ENCODE measurements at regions of chr5 and their contacts with region 1.

Region 1: GRCh38 chr5:175718401-175719108 is 60.7 kb downstream of the HRH2 start:
- DNase-seq: no peak
- ATAC-seq: no peak
- H3K4me3 ChIP-seq: no peak overlapping the region
- H3K27ac ChIP-seq: no peak overlapping the region
- H3K4me1 ChIP-seq: no peaks in the 10 kb centered on the region
- H3K27me3 ChIP-seq: 0 out of 2 replicates have a peak, but pooled peaks cover 2% of the 10 kb centered on the region
- CTCF ChIP-seq: peak; percentile 87

Region 2: GRCh38 chr5:175059687-175060211 is 658.8 kb before region 1 on chr5:
- CTCF ChIA-PET with region 1: interaction called, 12 read pairs
- POLR2A ChIA-PET with region 1: no interaction called
- in situ Hi-C with region 1: no loop called
- intact Hi-C with region 1: no loop called
- DNase-seq: no peak
- ATAC-seq: peak; percentile 30; the same call in 1 of the 2 replicates
- H3K4me3 ChIP-seq: peak overlapping the region in 1 of 2 experiments; percentile 37; a peak in 2 of 4 replicates
- H3K27ac ChIP-seq: no peak overlapping the region
- H3K4me1 ChIP-seq: no peaks in the 10 kb centered on the region
- H3K27me3 ChIP-seq: no peaks in the 10 kb centered on the region
- CTCF ChIP-seq: no peak

Region 3: GRCh38 chr5:175288048-175288621 is 430.4 kb before region 1 on chr5:
- CTCF ChIA-PET with region 1: no interaction called
- POLR2A ChIA-PET with region 1: no interaction called
- in situ Hi-C with region 1: no loop called
- intact Hi-C with region 1: no loop called
- DNase-seq: no peak
- ATAC-seq: peak; percentile 53
- H3K4me3 ChIP-seq: no peak overlapping the region
- H3K27ac ChIP-seq: no peak overlapping the region
- H3K4me1 ChIP-seq: no peaks in the 10 kb centered on the region
- H3K27me3 ChIP-seq: no peaks in the 10 kb centered on the region
- CTCF ChIP-seq: no peak

Region 4: DNA sequence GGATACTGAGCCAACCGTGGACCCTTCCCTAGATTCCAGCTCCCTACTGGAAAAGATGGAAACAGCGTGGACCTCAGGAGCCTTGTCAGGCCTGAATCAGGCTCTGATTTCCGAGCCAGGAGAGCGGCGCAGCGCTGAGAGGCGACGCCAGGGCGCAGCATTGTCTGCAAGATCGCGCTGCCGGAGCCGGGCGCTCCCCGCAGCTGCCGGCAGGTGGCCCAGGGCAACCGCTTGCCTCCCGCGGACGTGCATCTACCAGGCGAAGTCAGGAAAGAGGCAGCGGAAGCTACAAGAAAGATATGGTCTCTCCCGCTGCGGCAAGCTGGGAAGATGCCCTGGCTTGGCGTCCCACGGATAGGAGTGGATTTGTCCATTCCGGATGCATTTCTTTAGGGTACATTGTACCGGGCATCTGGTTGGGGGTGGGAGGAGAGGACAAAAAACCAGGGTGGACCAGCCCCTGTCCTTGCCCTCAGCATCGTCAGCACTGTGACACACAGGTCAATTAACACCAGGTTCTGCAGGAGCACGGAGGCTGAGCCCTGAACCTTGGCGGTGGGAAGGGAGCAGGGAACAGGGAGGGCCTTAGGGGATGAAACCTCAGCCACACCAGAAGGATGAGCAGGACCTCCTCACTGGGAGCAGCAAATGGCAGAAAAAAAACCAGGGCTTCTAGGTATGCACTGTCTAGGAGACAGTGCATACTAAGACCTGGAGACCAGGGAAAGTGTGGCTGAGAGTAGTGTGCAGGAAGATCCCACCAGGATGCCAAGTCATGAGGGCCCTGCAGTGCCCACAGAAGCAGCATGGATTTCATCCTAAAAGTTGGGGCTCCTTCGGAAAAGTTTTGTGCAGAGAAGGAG is 184.3 kb before region 1 on chr5:
- CTCF ChIA-PET with region 1: interaction called, 11 read pairs
- POLR2A ChIA-PET with region 1: no interaction called
- in situ Hi-C with region 1: no loop called
- intact Hi-C with region 1: loop called (anchors 2 kb)
- DNase-seq: peak; percentile 33
- ATAC-seq: peak; percentile 98
- H3K4me3 ChIP-seq: no peak overlapping the region
- H3K27ac ChIP-seq: no peak overlapping the region
- H3K4me1 ChIP-seq: no peaks in the 10 kb centered on the region
- H3K27me3 ChIP-seq: no peaks in the 10 kb centered on the region
- CTCF ChIP-seq: peak; percentile 99

Region 5: GRCh38 chr5:175741556-175741955 is 23.0 kb after region 1 on chr5:
- CTCF ChIA-PET with region 1: no interaction called
- POLR2A ChIA-PET with region 1: no interaction called
- in situ Hi-C with region 1: no loop called
- intact Hi-C with region 1: no loop called
- DNase-seq: no peak
- ATAC-seq: no peak
- H3K4me3 ChIP-seq: no peak overlapping the region
- H3K27ac ChIP-seq: no peak overlapping the region
- H3K4me1 ChIP-seq: no peaks in the 10 kb centered on the region
- H3K27me3 ChIP-seq: peaks cover 8% of the 10 kb centered on the region
- CTCF ChIP-seq: no peak

Region 6: DNA sequence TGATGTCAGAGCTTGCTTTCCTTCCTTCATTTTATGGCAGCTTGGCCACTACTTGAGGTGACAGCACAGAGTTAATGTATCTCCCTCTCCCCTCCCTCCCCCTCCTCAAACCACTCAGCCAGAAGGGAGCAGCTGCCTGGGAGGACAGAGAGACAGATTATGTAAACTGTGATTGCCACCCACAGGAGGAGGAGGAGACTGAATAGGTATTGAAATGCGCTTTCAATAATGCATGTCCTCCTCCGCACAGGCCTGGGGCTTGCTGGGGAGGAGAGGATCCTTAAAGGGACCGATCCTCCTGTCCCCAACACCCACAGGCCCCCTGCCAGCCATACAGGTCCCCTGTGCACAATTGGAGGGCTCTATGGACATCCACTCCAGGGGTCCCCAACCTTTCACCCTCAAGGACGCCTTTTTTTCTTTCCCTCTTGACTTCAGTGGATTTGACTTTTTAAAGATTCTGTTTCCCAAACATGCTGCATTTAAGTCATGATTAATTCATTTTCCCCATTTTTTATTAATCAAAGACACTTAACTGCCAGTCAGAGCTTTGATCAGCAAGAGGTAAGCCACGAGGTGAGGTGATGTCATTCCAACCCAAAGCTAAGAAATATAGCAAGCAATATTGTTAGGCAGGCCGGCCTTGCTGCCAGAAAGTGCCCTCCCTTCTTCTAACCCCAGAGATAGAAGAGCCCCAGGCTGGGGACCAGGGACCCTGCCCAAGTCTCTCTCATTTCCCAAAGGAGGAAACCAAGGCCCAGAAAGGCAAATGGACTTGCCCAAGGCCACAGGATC is 105.4 kb after region 1 on chr5:
- CTCF ChIA-PET with region 1: no interaction called
- POLR2A ChIA-PET with region 1: no interaction called
- in situ Hi-C with region 1: no loop called
- intact Hi-C with region 1: no loop called
- DNase-seq: no peak
- ATAC-seq: no peak
- H3K4me3 ChIP-seq: no peak overlapping the region
- H3K27ac ChIP-seq: no peak overlapping the region
- H3K4me1 ChIP-seq: no peaks in the 10 kb centered on the region
- H3K27me3 ChIP-seq: no peaks in the 10 kb centered on the region
- CTCF ChIP-seq: no peak

Measured in Panc1 (cell line).